CD4-positive, alpha-beta memory T cell (primary cell): ENCODE measurements at regions of chr1 and their contacts with region 1.

Region 1: GRCh38 chr1:223748773-223749733 is 36.7 kb downstream of the CAPN2 start:
- DNase-seq: peak; percentile 57 to 77 (median 71)
- H3K4me3 ChIP-seq: peak overlapping the region in 1 of 2 donors; percentile 51
- H3K4me3 Mint-ChIP-seq: peak overlapping the region; percentile 58 to 82 (median 76)
- H3K27ac ChIP-seq: peak overlapping the region; percentile 28
- H3K27ac Mint-ChIP-seq: peak overlapping the region in 6 of 7 donors; percentile 67 to 89 (median 76)
- H3K4me1 ChIP-seq: peaks cover 16% of the 10 kb centered on the region
- H3K4me1 Mint-ChIP-seq: peaks cover 6 to 28% (median 21%) of the 10 kb centered on the region in 4 donors
- H3K27me3 ChIP-seq: no peaks in the 10 kb centered on the region
- H3K27me3 Mint-ChIP-seq: no peaks in the 10 kb centered on the region

Region 2: GRCh38 chr1:223700942-223701637 is 48.0 kb before region 1 on chr1:
- CTCF ChIA-PET with region 1: interaction called, 120 read pairs
- POLR2A ChIA-PET with region 1: interaction called, 22 read pairs
- intact Hi-C with region 1: loop called (anchors 1 kb)
- DNase-seq: no peak
- H3K4me3 ChIP-seq: no peak overlapping the region
- H3K4me3 Mint-ChIP-seq: no peak overlapping the region
- H3K27ac ChIP-seq: no peak overlapping the region
- H3K27ac Mint-ChIP-seq: peak overlapping the region in 1 of 7 donors; percentile 41
- H3K4me1 ChIP-seq: peaks cover 7% of the 10 kb centered on the region
- H3K4me1 Mint-ChIP-seq: peaks cover 4 to 13% (median 7%) of the 10 kb centered on the region in 4 donors
- H3K27me3 ChIP-seq: no peaks in the 10 kb centered on the region
- H3K27me3 Mint-ChIP-seq: peaks cover 2 to 5% of the 10 kb centered on the region in 2 donors

Region 3: GRCh38 chr1:223726380-223727001 is 22.6 kb before region 1 on chr1:
- CTCF ChIA-PET with region 1: interaction called, 233 read pairs
- POLR2A ChIA-PET with region 1: interaction called, 19 read pairs
- intact Hi-C with region 1: no loop called
- DNase-seq: peak; percentile 68 to 98 (median 78)
- H3K4me3 ChIP-seq: peak overlapping the region in 1 of 2 donors; percentile 20
- H3K4me3 Mint-ChIP-seq: peak overlapping the region; percentile 70 to 92 (median 82)
- H3K27ac ChIP-seq: peak overlapping the region; percentile 85
- H3K27ac Mint-ChIP-seq: peak overlapping the region; percentile 85 to 99 (median 95)
- H3K4me1 ChIP-seq: peaks cover 80% of the 10 kb centered on the region
- H3K4me1 Mint-ChIP-seq: peaks cover 55 to 94% (median 74%) of the 10 kb centered on the region in 4 donors
- H3K27me3 ChIP-seq: no peaks in the 10 kb centered on the region
- H3K27me3 Mint-ChIP-seq: no peaks in the 10 kb centered on the region

Region 4: GRCh38 chr1:223771814-223772770 is 23.0 kb after region 1 on chr1:
- CTCF ChIA-PET with region 1: interaction called, 23 read pairs
- POLR2A ChIA-PET with region 1: no interaction called
- intact Hi-C with region 1: no loop called
- DNase-seq: no peak
- H3K4me3 ChIP-seq: no peak overlapping the region
- H3K4me3 Mint-ChIP-seq: no peak overlapping the region
- H3K27ac ChIP-seq: no peak overlapping the region
- H3K27ac Mint-ChIP-seq: peak overlapping the region; percentile 43 to 82 (median 60)
- H3K4me1 ChIP-seq: peaks cover 15% of the 10 kb centered on the region
- H3K4me1 Mint-ChIP-seq: peaks cover 15 to 34% (median 22%) of the 10 kb centered on the region in 4 donors
- H3K27me3 ChIP-seq: no peaks in the 10 kb centered on the region
- H3K27me3 Mint-ChIP-seq: no peaks in the 10 kb centered on the region